ENCODE measurements at regions of chr2 and their contacts with region 1.

Region 1: DNA sequence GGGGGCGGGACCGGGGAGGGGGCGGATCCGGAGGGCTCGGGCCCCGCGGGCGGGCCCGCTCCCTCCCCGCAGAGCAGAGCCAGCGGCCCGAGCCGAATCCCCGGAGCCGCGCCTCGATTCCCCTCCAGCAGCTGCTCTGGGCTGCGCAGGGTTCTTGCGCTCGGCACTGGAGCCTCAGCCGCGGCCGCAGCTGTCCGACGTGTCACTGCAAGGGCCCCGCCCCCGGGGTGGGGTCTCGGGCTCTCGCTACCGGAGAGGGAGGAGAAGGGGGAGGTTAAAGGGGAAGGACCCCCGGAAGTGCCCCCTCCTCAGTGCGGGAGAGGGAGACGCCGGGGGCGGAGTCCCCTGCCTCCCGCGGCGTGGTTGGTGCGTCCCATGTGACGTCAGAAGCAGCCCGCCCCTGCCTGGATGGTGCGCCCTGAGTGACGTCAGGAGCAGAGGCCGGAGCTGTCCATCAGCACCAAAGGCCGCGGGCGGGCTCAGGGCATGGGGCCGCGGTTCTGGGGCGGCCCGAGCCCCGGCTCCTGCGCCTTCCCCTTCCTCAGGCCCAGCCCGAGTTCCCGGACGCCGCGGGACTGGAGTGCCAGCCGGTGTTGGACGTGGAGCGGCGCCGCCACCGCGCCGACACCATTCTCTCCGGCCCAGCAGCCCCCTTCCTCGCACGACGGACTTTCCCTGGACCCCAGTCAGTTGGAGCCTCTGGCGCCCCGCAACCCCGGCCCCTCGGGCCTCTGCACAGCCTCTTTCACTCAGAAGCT is at the starts of genes CHPF and TMEM198:
- DNase-seq: peak; percentile 96 to 99
- H3K4me3 ChIP-seq: peak within 1 kb of the TSS; percentile 87 to 90
- H3K27ac ChIP-seq: peak within 1 kb of the TSS; percentile 92 to 95
- H3K4me1 ChIP-seq: peaks cover 8 to 24% of the 10 kb centered on the region in 2 donors
- H3K27me3 ChIP-seq: no peaks in the 10 kb centered on the region
- CTCF ChIP-seq: no peak
- total RNA-seq, gene CHPF: 249 TPM
- total RNA-seq, gene TMEM198: 6.0 TPM

Region 2: GRCh38 chr2:219331560-219332213 is 212.1 kb before region 1 on chr2:
- intact Hi-C with region 1: no loop called
- DNase-seq: no peak
- H3K4me3 ChIP-seq: no peak overlapping the region
- H3K27ac ChIP-seq: no peak overlapping the region
- H3K4me1 ChIP-seq: no peaks in the 10 kb centered on the region
- H3K27me3 ChIP-seq: peaks cover 5% of the 10 kb centered on the region
- CTCF ChIP-seq: no peak

Region 3: DNA sequence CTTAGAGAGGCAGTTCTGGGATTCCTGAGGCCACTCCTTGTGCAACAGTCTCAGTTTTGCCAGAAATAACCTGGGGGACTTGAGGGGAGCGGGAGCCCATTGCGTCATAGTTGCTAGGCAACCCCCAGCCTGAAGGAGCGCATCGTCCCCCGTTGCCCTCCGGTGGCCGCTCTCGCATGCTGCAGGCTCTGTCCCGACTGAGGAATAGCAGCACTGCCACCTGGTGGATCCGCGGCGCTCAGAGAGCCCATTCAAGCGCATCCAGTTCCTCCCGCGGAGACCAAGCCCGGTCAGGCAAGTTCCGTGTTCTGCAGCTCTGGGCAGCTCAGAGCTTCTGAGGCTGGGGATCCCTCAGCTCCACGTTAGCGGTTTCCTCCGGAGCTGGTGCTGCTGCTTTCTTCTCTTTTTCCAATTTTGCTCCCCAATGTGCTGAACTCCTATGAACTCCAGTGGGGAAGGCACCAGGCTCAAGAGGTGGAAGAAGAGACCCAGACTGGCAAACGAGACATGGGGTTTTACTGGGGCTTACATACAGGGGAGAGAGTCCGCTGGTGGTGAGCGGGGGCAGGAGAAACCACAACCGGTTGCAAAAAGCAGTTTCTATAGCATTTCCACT is 98.8 kb after region 1 on chr2:
- intact Hi-C with region 1: loop called (anchors 1 kb)
- DNase-seq: peak; percentile 90 to 99
- H3K4me3 ChIP-seq: no peak overlapping the region
- H3K27ac ChIP-seq: no peak overlapping the region
- H3K4me1 ChIP-seq: peaks cover 0 to 12% of the 10 kb centered on the region in 2 donors
- H3K27me3 ChIP-seq: no peaks in the 10 kb centered on the region
- CTCF ChIP-seq: peak; percentile 99 to 100 (median 99)

Measured in ascending aorta (tissue), 2 donors.